Pancreas (tissue), 10 donors: ENCODE measurements at regions of chr15 and their contacts with region 1.

Region 1: GRCh38 chr15:39874890-39875549 is 45.0 kb downstream of the GPR176 start:
- DNase-seq: peak in 2 of 6 donors; percentile 6 to 33
- ATAC-seq: peak in 3 of 4 donors; percentile 71 to 82 (median 81)
- H3K4me3 ChIP-seq: no peak overlapping the region
- H3K27ac ChIP-seq: no peak overlapping the region
- H3K4me1 ChIP-seq: no peaks in the 10 kb centered on the region
- H3K27me3 ChIP-seq: no peaks in the 10 kb centered on the region
- CTCF ChIP-seq: peak in 3 of 4 donors; percentile 36 to 43 (median 37)

Region 2: GRCh38 chr15:39666677-39667076 is 208.3 kb before region 1 on chr15:
- intact Hi-C with region 1: no loop called
- DNase-seq: no peak
- ATAC-seq: no peak
- H3K4me3 ChIP-seq: no peak overlapping the region
- H3K27ac ChIP-seq: no peak overlapping the region
- H3K4me1 ChIP-seq: no peaks in the 10 kb centered on the region
- H3K27me3 ChIP-seq: peaks cover 0 to 10% (median 0%) of the 10 kb centered on the region in 4 donors
- CTCF ChIP-seq: no peak

Region 3: DNA sequence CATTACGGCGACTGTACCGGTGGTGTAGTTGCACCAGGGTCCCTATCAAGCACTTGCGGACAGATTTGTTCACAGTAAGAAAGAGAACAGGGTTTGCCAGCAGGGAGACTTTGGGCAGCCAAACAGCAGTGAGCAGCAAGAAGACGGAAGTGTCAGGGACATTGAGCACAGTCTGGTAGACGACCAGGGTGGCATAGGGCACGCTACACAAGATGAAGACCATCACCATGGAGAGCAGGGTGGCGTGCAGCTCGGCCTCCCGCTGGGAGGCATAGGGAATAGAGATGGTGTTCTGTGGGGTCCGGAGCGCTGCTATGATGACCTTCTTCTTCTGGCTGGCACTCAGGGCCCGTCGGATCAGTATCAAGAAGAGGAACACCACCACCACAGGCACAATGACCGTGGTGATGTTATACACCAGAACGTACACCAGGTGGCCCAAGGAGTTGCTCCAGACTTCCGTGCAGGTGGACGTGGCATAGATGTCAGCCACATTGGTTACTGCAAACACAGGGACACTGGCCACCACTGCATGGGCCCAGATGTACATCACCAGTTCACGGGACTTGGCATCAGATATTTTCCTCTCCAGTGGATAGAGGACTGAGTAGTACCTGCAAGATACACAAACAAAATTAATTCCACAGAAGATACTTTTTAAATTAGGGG is 73.2 kb before region 1 on chr15:
- intact Hi-C with region 1: loop called in 2 of 3 experiments (anchors 10 kb)
- DNase-seq: peak in 5 of 6 donors; percentile 17 to 57 (median 45)
- ATAC-seq: peak; percentile 76 to 98 (median 87)
- H3K4me3 ChIP-seq: no peak overlapping the region
- H3K27ac ChIP-seq: no peak overlapping the region
- H3K4me1 ChIP-seq: no peaks in the 10 kb centered on the region
- H3K27me3 ChIP-seq: no peaks in the 10 kb centered on the region
- CTCF ChIP-seq: peak; percentile 13 to 39 (median 32)

Region 4: GRCh38 chr15:39979606-39980005 is 104.6 kb after region 1 on chr15:
- intact Hi-C with region 1: no loop called
- DNase-seq: no peak
- ATAC-seq: no peak
- H3K4me3 ChIP-seq: no peak overlapping the region
- H3K27ac ChIP-seq: no peak overlapping the region
- H3K4me1 ChIP-seq: no peaks in the 10 kb centered on the region
- H3K27me3 ChIP-seq: no peaks in the 10 kb centered on the region
- CTCF ChIP-seq: no peak